ENCODE measurements at regions of chr9 and their contacts with region 1.

Region 1: DNA sequence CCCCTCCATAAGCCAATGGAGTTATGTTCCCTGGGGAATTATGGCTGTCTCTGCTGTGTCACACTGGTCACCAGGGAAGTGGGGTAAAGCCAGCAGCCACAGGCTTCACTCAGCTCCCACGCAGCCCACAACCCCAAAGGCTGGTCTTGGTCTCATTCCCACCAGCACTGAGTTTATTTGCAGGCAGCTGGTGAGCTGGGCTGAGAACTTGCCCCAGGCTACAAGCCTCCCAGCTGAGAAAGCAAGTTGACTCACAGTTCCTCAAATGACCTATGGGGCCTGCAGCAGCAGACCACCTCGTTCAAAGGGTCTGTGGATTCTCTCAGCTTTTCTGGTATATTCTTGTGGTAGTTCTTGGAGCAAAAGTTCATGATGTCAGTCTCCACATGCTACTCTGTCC is 468.4 kb downstream of the ELAVL2 start:
- DNase-seq: no peak
- ATAC-seq: no peak
- H3K4me3 ChIP-seq: no peak overlapping the region
- H3K27ac ChIP-seq: no peak overlapping the region
- H3K4me1 ChIP-seq: no peaks in the 10 kb centered on the region
- H3K27me3 ChIP-seq: no peaks in the 10 kb centered on the region
- CTCF ChIP-seq: no peak
- POLR2A ChIP-seq: no peak

Region 2: DNA sequence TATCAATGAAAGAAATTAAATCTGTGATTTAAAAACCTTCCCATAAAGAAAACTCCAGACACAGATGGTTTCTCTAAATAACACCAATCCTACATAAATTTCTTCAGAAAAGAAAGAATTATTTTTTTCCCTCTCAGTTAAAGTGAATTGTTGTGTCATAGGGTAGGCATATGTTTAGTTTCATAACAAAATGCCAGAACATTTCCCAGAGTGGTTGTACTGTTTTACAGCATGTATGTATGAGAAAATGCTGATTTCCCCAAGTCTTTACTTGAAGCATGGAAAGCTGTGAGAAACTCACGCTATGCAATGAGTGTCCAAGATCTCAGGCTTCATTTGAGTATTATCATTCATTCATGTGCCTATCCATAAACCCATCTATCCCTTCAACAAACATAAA is 114.1 kb before region 1 on chr9:
- intact Hi-C with region 1: no loop called
- DNase-seq: no peak
- ATAC-seq: no peak
- H3K4me3 ChIP-seq: no peak overlapping the region
- H3K27ac ChIP-seq: no peak overlapping the region
- H3K4me1 ChIP-seq: no peaks in the 10 kb centered on the region
- H3K27me3 ChIP-seq: no peaks in the 10 kb centered on the region
- CTCF ChIP-seq: no peak
- POLR2A ChIP-seq: no peak

Region 3: DNA sequence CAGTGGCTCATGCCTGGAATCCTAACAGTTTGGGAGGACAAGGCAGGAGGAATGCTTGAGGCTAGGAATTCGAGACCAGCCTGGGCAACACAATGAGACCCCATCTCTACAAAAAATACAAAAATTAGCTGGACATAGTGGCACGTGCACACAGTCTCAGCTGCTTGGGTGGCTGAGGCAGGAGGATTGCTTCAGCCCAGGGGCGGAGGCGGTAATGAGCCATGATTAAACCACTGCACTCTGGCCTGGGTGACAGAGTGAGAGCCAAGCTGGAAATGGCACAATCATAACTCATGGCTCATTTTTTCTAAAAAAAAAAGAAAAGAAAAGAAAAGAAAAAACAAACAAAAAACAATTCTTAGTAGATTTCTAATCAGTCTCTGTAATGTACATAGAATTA is 22.2 kb after region 1 on chr9:
- intact Hi-C with region 1: loop called in 2 of 10 experiments (anchors 1 to 2 kb)
- DNase-seq: no peak
- ATAC-seq: no peak
- H3K4me3 ChIP-seq: no peak overlapping the region
- H3K27ac ChIP-seq: no peak overlapping the region
- H3K4me1 ChIP-seq: no peaks in the 10 kb centered on the region
- H3K27me3 ChIP-seq: no peaks in the 10 kb centered on the region
- CTCF ChIP-seq: no peak
- POLR2A ChIP-seq: no peak